CD8-positive, alpha-beta T cell (primary cell): ENCODE measurements at regions of chr7 and their contacts with region 1.

Region 1: GRCh38 chr7:129825496-129826267 is 127.1 kb downstream of the UBE2H start:
- DNase-seq: peak; percentile 80 to 95 (median 87)
- ATAC-seq: peak; percentile 84
- H3K4me3 ChIP-seq: peak overlapping the region; percentile 73 to 74
- H3K4me3 Mint-ChIP-seq: peak overlapping the region; percentile 89
- H3K27ac ChIP-seq: no peak overlapping the region
- H3K27ac Mint-ChIP-seq: no peak overlapping the region
- H3K4me1 ChIP-seq: no peaks in the 10 kb centered on the region
- H3K4me1 Mint-ChIP-seq: peaks cover 17% of the 10 kb centered on the region
- H3K27me3 ChIP-seq: no peaks in the 10 kb centered on the region
- H3K27me3 Mint-ChIP-seq: no peaks in the 10 kb centered on the region
- CTCF ChIP-seq: peak; percentile 90

Region 2: GRCh38 chr7:129367700-129368388 is 457.8 kb before region 1 on chr7:
- CTCF ChIA-PET with region 1: interaction called, 8 read pairs
- POLR2A ChIA-PET with region 1: no interaction called
- intact Hi-C with region 1: loop called (anchors 1 kb)
- DNase-seq: peak; percentile 40 to 80 (median 73)
- ATAC-seq: peak; percentile 88
- H3K4me3 ChIP-seq: no peak overlapping the region
- H3K4me3 Mint-ChIP-seq: peak overlapping the region; percentile 20
- H3K27ac ChIP-seq: no peak overlapping the region
- H3K27ac Mint-ChIP-seq: no peak overlapping the region
- H3K4me1 ChIP-seq: no peaks in the 10 kb centered on the region
- H3K4me1 Mint-ChIP-seq: peaks cover 13% of the 10 kb centered on the region
- H3K27me3 ChIP-seq: no peaks in the 10 kb centered on the region
- H3K27me3 Mint-ChIP-seq: no peaks in the 10 kb centered on the region
- CTCF ChIP-seq: peak; percentile 69

Region 3: DNA sequence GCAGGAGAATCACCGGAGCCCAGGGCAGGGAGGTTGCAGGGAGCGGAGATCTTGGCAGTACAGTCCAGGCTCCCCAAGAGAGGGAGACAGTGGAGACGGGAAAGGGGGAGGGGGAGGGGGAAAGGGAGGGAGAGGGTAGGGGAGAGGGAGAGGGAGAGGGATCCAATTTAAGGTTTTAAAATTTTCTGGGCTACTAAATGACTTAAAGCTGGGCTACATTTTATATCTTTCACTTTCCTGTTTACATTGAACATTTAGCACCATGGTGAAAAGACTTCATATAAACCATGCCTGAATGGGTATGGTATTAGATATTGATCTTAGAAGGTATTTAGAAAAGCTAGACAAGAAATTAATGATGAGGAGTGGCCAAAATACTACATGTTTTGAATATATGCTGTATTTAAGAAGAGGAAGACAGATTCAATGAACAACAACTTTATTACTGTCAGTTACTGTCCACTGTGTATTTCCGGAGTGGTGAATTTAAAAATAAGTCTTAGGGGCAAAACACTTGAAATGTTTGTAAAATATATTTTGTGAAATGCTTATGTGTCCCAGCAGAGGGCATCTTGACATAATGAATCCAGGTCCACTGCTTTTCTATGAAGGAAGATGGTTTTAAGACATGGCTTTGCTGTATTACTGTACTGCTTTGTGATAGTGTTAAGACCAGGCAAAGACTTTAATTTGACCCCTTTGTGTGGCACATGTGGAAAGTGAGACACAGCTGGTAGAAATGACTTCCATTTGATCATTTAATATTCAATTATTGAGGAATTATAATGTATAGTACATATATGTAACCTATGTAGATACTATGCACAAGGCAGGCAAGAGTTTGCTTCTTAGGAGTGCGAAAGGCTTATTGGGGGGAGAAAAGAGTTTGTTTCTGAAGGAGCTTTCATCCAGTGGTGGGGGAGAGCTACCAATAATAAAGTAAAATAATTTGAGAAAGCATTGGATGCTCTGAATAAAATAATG is 161.4 kb before region 1 on chr7:
- CTCF ChIA-PET with region 1: interaction called, 5 read pairs
- POLR2A ChIA-PET with region 1: no interaction called
- intact Hi-C with region 1: loop called (anchors 1 kb)
- DNase-seq: peak in 2 of 9 experiments; percentile 15 to 31
- ATAC-seq: no peak
- H3K4me3 ChIP-seq: no peak overlapping the region
- H3K4me3 Mint-ChIP-seq: no peak overlapping the region
- H3K27ac ChIP-seq: no peak overlapping the region
- H3K27ac Mint-ChIP-seq: no peak overlapping the region
- H3K4me1 ChIP-seq: no peaks in the 10 kb centered on the region
- H3K4me1 Mint-ChIP-seq: peaks cover 7% of the 10 kb centered on the region
- H3K27me3 ChIP-seq: no peaks in the 10 kb centered on the region
- H3K27me3 Mint-ChIP-seq: no peaks in the 10 kb centered on the region
- CTCF ChIP-seq: no peak

Region 4: DNA sequence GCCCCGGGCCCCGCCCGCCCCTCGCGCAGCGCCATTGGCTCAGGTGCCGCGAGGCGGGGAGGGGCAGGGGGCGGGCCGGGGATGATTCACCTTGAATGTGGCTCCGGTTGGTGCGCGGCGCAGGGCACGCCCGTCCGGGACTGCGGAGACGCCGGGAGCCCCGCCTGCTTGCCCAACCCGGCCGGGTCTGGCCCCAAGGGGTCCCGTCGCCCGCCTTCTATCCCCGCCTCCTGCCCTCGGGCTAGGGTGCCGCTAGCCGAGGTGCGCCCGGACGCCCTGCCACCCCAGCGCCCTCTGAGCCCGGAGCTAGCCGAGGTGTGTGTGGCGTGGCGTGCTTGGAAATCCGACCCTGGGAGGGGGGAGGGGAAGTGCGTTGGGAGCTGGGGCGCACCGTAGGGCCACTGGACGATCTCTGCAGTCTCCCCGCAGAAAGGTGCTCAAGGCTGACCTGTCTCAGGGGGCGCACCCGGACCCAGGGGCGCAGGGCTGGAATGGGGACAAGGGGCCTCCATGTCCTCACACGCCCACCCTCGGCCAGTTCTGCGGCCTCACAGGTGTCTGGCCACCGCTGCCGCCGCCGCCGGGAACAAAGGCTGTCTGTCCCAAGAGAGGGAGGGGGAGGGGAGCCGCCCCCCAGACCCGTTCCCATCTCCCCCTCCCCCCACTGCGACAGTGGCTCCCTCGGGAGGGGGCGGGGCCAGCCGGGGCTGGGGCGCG is 45.3 kb before region 1 on chr7:
- CTCF ChIA-PET with region 1: no interaction called
- POLR2A ChIA-PET with region 1: no interaction called
- intact Hi-C with region 1: loop called (anchors 2 to 5 kb)
- DNase-seq: peak; percentile 33 to 79 (median 69)
- ATAC-seq: peak; percentile 85
- H3K4me3 ChIP-seq: peak overlapping the region; percentile 42 to 60
- H3K4me3 Mint-ChIP-seq: peak overlapping the region; percentile 76
- H3K27ac ChIP-seq: no peak overlapping the region
- H3K27ac Mint-ChIP-seq: no peak overlapping the region
- H3K4me1 ChIP-seq: peaks cover 57% of the 10 kb centered on the region
- H3K4me1 Mint-ChIP-seq: peaks cover 39% of the 10 kb centered on the region
- H3K27me3 ChIP-seq: peaks cover 60 to 62% of the 10 kb centered on the region in 2 experiments
- H3K27me3 Mint-ChIP-seq: peaks cover 40% of the 10 kb centered on the region
- CTCF ChIP-seq: no peak

Region 5: DNA sequence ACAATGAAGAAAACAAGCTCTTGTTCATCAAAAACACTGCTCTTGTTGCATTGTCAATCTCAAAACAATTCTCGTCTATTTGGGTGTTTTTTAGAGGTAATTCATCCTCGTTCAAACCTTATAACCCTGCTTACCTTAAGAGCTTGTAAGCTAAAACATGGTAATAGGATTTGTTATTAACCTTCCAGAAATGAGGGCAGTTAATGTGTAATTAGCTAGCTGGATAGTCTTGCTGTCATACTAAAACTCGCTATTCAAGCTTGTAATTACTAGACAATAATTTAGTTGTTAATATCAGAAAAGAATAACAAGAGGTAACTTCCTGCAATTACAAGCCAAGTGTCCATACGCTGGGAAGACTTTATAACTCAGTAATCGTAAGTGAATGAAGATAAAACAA is 25.5 kb after region 1 on chr7:
- CTCF ChIA-PET with region 1: interaction called, 12 read pairs
- POLR2A ChIA-PET with region 1: no interaction called
- intact Hi-C with region 1: no loop called
- DNase-seq: no peak
- ATAC-seq: no peak
- H3K4me3 ChIP-seq: no peak overlapping the region
- H3K4me3 Mint-ChIP-seq: no peak overlapping the region
- H3K27ac ChIP-seq: no peak overlapping the region
- H3K27ac Mint-ChIP-seq: no peak overlapping the region
- H3K4me1 ChIP-seq: peaks cover 11% of the 10 kb centered on the region
- H3K4me1 Mint-ChIP-seq: peaks cover 51% of the 10 kb centered on the region
- H3K27me3 ChIP-seq: no peaks in the 10 kb centered on the region
- H3K27me3 Mint-ChIP-seq: no peaks in the 10 kb centered on the region
- CTCF ChIP-seq: no peak